SK-N-SH (cell line): ENCODE measurements at regions of chr19 and their contacts with region 1.

Region 1: GRCh38 chr19:45485305-45486077 is 11.4 kb downstream of the RTN2 start:
- DNase-seq: peak; percentile 88
- H3K4me3 ChIP-seq: peak overlapping the region; percentile 49 to 64
- H3K27ac ChIP-seq: peak overlapping the region; percentile 27 to 54; a peak in 1 of 4 replicates
- H3K4me1 ChIP-seq: no peaks in the 10 kb centered on the region; a peak in 1 of 4 replicates
- H3K27me3 ChIP-seq: no peaks in the 10 kb centered on the region
- CTCF ChIP-seq: peak; percentile 67
- EP300 ChIP-seq: no peak
- RAD21 ChIP-seq: peak; percentile 62

Region 2: DNA sequence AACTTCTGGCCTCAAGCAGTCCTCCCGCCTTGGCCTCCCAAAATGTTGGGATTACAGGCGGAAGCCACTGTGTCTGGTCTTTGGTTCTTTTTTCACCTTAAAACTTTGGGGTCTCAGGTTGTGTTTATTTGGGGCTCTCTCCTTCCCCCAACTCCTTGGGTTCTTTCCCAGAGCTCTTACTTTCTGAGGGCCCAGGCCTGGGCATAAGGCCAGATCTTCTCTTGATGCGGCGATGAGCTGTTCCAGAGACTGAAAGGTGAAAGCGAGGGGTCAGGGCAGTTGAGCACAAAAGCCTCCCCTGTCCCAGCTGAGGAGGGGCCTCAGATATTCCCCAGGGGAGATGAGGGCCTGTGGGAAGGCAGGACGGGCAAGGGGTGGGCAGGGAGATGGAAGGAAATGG is 72.0 kb before region 1 on chr19:
- CTCF ChIA-PET with region 1: interaction called, 14 read pairs
- POLR2A ChIA-PET with region 1: no interaction called
- DNase-seq: no peak
- H3K4me3 ChIP-seq: no peak overlapping the region
- H3K27ac ChIP-seq: no peak overlapping the region
- H3K4me1 ChIP-seq: no peaks in the 10 kb centered on the region
- H3K27me3 ChIP-seq: no peaks in the 10 kb centered on the region
- CTCF ChIP-seq: no peak
- EP300 ChIP-seq: no peak
- RAD21 ChIP-seq: no peak

Region 3: DNA sequence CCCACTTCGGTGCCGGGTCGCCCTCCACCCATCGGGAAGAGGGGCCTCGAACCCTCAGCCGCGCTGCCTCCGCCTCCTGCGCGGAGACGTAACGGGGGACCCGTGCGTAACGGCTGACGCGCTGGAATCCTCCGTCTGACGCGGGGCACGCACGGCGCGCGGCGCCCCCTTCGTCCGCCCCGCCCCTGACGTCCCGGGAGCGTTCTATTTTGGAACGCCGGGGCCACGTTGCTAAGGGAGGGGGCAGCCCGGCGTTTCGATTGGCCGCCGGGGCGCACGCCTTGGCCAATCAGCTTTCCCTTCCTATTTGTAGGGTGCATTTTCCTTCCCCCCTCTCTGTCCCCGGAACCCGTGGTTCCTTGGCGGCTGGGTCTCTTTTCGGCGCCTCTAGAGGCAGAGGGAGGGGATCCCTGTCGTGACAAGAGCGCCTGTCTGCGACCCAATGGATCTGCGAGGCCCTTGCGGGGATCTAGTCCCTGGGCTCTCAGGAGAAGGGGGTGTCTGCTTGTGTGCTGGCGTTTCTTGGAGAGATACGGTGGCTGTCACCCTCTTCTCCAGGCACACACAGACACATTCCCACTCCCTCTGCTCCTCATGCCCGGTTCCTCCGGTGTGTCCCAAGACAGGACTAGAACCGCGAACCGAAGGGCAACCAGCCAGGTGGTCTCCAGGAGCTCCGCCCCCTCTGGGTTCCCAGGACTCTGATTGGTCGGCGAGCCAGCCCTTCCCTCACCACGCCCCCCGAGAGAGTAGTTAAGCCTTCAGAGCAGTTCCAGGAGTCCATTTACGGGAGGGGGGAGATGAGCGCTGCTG is 16.2 kb before region 1 on chr19:
- CTCF ChIA-PET with region 1: interaction called, 73 read pairs
- POLR2A ChIA-PET with region 1: interaction called, 4 read pairs
- DNase-seq: peak; percentile 93
- H3K4me3 ChIP-seq: peak overlapping the region; percentile 81 to 84
- H3K27ac ChIP-seq: peak overlapping the region; percentile 78 to 95
- H3K4me1 ChIP-seq: peaks cover 0 to 19% of the 10 kb centered on the region in 2 experiments; a peak in 1 of 4 replicates
- H3K27me3 ChIP-seq: no peaks in the 10 kb centered on the region
- CTCF ChIP-seq: no peak
- EP300 ChIP-seq: no peak
- RAD21 ChIP-seq: no peak

Region 4: DNA sequence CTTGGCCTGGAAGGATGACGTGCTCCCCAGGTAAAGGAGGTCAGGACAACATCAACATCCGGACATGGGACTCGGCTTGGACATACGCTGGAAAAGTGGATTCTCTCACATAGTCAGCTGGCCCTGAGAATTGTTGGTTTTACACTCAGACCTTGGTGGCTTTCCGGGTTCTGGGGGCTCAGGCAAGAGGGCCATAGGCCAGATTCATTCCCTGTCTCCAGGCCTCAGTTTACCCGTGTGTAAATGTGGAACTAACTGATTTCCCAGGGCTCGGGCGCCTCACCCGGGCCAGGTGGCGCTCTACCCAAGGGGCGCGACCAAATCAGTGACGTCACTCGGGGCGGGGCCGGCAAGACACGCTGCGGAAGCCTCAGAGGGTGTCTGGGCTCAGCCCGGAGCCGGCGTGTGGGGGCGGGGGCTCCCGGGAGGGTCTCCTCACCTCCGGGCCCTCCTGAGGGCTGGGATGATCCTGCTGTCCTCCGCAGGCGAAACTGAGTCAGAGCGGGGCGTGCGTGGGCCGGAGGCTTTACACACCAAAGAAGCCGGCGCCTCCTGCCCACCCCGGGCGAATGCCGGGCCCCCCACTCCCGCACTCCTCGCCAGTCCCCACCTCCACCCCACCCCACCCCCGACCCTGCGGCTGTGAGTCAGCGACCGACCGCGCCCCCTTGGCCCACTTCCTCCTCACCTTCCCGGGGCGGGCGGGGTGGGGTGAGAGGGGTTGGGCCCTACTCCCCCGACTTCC is 20.9 kb after region 1 on chr19:
- CTCF ChIA-PET with region 1: interaction called, 97 read pairs
- POLR2A ChIA-PET with region 1: no interaction called
- DNase-seq: peak; percentile 94
- H3K4me3 ChIP-seq: peak overlapping the region; percentile 74 to 98
- H3K27ac ChIP-seq: peak overlapping the region; percentile 88 to 91
- H3K4me1 ChIP-seq: peaks cover 6 to 12% of the 10 kb centered on the region in 2 experiments; a peak in 2 of 4 replicates
- H3K27me3 ChIP-seq: no peaks in the 10 kb centered on the region
- CTCF ChIP-seq: peak; percentile 63
- EP300 ChIP-seq: peak; percentile 4 to 29; a peak in 1 of 4 replicates
- RAD21 ChIP-seq: peak; percentile 53